ENCODE measurements at regions of chr19 and their contacts with region 1.

Region 1: DNA sequence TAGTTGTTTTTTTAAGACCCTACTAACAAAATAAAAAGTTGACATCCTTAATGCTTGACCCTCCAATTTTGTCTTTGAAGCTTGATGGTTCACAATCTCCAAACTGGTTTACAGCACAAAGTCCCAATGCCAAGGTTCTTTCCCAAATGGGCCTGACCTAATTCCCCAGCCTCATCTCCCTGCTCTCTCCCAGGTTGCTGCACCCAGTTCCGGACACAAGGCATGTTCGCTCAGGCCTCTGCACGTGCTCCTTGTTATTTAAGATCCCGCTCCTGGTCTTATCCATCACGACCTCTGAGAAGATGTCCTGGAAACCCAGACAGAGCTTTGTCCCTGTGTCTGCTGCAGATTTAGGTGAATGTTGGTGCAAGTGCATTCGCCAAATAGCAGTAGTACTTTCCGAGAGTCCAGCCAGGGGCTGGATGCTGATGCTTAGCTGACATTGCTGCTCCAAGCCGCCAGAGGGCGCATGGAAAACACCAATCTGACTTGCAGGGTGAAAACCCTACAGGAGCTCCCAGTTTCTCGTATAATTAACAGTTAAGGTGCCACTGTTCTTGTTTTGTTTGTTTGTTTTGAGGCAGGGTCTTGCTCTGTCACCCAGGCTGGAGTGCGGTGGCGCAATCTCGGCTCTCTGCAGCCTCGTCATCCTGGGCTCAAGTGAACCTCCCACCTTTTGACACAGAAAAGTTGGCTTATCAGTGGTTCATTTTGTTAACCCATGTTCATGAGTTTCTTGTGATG is 18.5 kb downstream of the LYPD3 start:
- DNase-seq: peak; percentile 89
- H3K4me3 Mint-ChIP-seq: no peak overlapping the region
- H3K27ac Mint-ChIP-seq: no peak overlapping the region
- H3K4me1 Mint-ChIP-seq: peaks cover 21% of the 10 kb centered on the region
- H3K27me3 Mint-ChIP-seq: no peaks in the 10 kb centered on the region

Region 2: DNA sequence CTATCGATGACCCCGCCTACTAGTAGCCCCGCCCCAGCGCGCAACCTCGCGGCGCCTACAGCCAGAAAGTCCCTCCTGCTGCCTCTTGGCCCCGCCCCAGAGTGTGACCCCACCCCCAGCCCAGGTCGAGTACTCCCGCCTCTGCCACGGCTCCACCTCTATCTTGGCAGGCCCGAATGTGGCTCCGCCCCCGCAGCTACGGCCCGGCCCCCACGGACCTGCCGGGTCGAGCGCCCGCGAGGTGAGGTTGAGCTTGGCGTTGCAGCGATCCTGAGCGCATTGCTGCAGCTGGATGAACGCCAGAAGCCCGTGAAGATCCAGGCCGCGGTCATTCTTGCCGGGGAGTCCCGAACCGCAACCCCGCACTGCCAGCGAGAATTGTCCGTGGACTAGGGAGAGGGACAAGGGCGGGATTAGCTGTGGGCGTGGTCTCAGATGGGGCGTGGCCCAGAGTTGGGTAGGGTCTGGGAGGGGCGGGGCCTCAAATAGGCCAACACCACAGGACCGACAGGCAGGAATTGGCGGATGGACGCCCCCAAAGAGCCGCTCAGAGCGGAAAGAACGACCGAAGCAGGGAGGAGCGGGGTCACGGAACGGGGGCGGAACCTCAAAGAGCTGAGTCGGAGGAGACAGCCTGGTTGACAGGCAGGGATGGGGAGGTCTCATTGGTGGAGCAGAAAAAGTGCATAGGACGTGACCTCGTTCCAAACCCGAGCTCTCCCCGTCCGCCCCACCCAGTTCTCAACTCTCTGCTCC is 16.6 kb after region 1 on chr19:
- CTCF ChIA-PET with region 1: interaction called, 37 read pairs
- intact Hi-C with region 1: no loop called
- DNase-seq: peak; percentile 100
- H3K4me3 Mint-ChIP-seq: peak overlapping the region; percentile 94
- H3K27ac Mint-ChIP-seq: peak overlapping the region; percentile 86
- H3K4me1 Mint-ChIP-seq: peaks cover 37% of the 10 kb centered on the region
- H3K27me3 Mint-ChIP-seq: no peaks in the 10 kb centered on the region

Region 3: DNA sequence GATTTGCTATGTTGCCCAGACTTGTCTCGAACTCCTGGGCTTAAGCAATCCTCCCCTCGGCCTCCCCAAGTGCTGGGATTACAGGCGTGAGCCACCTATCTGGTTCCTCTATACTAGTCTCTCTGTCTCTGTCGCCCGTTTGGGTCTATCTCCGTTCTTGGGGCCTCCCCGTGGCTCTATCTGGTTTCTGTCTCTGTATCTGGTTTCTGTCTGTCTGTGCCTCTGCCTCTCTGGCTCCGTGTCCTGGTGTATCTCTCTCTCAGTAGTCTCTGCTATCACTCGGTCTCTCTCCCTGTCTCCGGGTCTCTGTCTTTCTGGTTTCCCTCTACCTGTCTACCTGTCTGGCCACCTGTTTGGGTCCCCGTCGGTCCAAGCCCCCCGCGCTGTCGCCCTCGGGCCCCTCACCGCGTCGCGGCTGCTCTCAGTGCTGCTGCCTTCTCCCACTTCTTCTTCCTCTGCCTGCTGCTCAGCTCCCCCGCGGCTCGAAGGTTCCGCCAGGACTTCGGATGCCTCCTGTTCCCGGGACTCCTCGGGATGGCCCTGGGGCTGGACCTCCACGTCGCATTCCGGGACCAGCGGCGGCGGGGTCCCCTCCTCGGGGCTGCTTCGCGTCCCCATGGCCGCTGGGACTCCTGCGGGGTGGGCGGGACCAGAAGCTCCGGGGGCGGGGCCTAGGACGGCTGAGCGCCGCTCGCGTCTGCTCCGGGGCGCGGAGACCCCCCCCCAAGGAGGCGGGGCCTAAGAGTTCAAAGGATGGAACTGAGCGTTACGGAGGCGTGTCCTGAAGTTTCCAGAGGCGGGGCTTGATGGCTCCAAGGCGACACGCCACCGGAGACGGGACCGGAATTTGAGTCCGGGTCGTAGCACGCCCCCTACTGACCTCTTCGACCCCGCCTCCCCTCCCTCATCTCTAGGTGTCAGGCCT is 56.8 kb after region 1 on chr19:
- CTCF ChIA-PET with region 1: interaction called, 32 read pairs
- intact Hi-C with region 1: loop called (anchors 1 kb)
- DNase-seq: peak; percentile 99
- H3K4me3 Mint-ChIP-seq: peak overlapping the region; percentile 97
- H3K27ac Mint-ChIP-seq: peak overlapping the region; percentile 92
- H3K4me1 Mint-ChIP-seq: peaks cover 29% of the 10 kb centered on the region
- H3K27me3 Mint-ChIP-seq: no peaks in the 10 kb centered on the region

Region 4: DNA sequence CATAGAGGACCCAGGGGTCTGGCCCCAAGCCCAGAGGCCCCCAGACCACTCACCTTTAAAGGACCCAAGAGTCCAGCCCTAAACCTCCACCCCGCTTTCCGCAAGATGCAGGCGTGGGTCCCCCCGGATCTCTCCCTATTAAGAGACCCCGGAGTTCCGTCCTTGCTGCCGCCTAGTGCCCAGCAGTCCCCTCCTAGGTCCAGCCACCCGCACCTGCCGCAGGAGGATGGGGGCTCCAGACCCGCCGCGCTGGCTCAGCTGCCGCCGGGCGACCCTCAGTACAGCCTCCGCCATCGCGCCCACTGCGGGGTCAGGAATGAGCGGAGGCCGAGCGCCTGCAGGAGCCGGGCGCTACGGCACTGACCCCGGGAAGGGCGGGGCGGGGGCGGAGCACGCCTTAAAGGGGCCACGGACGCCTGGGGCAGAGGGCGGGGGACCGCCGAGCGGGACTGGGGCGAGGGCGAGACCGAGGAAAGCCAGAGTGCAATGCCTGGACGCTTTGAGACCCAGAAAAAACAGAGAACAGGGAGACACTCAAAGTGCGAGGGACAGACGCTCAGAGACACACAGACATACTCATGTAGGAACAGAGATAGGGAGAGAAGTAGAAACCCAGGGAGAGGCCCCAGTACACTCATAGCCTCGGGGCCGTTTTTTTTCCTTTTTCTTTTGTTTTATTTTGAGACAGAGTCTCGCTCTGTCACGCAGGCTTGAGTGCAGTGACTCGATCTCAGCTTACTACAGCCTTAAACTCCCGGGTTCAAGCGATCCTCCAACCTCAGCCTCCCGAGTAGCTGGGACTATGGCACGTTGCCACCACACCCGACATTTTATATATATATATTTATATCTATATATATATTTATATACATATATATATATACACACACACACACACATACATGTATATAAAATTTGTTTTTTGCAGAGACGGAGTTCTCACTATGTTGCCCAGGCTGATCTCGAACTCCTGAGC is 80.3 kb after region 1 on chr19 and contains the start of gene ETHE1:
- CTCF ChIA-PET with region 1: interaction called, 230 read pairs
- intact Hi-C with region 1: no loop called
- DNase-seq: peak; percentile 73
- H3K4me3 Mint-ChIP-seq: peak within 1 kb of the TSS; percentile 97
- H3K27ac Mint-ChIP-seq: peak within 1 kb of the TSS; percentile 96
- H3K4me1 Mint-ChIP-seq: peaks cover 22% of the 10 kb centered on the region
- H3K27me3 Mint-ChIP-seq: no peaks in the 10 kb centered on the region
- total RNA-seq, gene ETHE1: 62.1 to 64.4 TPM

Region 5: GRCh38 chr19:43575156-43575950 is 128.4 kb after region 1 on chr19 and contains the starts of genes PINLYP and XRCC1:
- CTCF ChIA-PET with region 1: no interaction called
- intact Hi-C with region 1: no loop called
- DNase-seq: peak; percentile 99
- H3K4me3 Mint-ChIP-seq: peak within 1 kb of the TSS; percentile 95
- H3K27ac Mint-ChIP-seq: peak within 1 kb of the TSS; percentile 94
- H3K4me1 Mint-ChIP-seq: peaks cover 37% of the 10 kb centered on the region
- H3K27me3 Mint-ChIP-seq: no peaks in the 10 kb centered on the region
- total RNA-seq, gene PINLYP: 3.2 to 3.8 TPM
- total RNA-seq, gene XRCC1: 33.7 to 34.5 TPM

Region 6: GRCh38 chr19:43809762-43810696 is 363.1 kb after region 1 on chr19:
- CTCF ChIA-PET with region 1: no interaction called
- intact Hi-C with region 1: loop called (anchors 5 kb)
- DNase-seq: no peak
- H3K4me3 Mint-ChIP-seq: no peak overlapping the region
- H3K27ac Mint-ChIP-seq: no peak overlapping the region
- H3K4me1 Mint-ChIP-seq: peaks cover 2% of the 10 kb centered on the region
- H3K27me3 Mint-ChIP-seq: peaks cover 3% of the 10 kb centered on the region

Measured in activated naive CD4-positive, alpha-beta T cell treated with anti-CD3 and anti-CD28 coated beads for 36 hours (primary cell).